Activated CD4-positive, alpha-beta memory T cell treated with anti-CD3 and anti-CD28 coated beads for 36 hours (primary cell): ENCODE measurements at regions of chr2 and their contacts with region 1.

Region 1: DNA sequence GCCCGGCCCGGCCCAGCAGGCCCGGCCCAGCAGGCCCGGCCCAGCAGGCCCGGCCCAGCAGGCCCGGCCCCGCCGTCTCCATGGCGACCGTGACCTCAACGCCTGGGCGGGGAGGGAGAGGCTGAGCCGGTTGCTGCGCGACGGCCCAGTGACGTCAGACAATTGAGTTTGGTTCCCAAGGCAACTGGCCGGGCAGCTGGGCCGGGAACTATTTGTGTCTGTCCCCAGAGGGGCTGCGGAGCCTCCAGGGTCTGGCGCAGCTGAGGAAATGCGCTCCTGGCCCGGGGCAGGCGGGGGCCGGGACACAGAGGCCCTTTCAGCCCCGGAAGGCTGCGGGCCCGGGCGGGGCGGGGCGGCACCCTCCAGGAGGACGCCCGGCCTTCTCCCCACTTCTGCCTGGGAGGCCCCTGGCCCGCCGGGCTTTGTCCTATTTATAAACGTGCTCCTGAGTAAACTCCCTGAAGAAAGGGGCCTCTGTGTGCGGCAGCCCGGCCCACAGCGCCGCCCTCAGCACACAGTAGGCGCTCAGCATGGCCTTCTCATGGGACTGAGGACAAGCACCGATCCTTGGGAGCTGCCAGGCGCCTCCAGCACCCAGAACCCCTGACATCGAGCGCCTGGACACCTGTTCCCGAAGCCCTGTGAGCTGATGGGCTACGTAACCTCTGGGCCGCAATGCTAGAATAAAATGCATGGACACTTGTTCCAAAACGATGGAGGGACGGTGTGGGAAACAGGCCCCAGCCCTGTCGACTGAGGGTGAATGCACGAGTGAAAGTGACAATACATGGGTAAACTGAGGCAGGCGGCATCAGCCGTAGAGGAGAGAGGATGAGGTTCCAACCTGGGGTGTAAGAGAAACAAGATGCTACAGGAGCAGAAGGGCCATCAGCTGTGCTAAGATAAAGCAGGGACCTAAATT is 12.3 kb downstream of the TEX44 start:
- DNase-seq: peak; percentile 94
- H3K4me3 Mint-ChIP-seq: peak overlapping the region; percentile 46
- H3K27ac Mint-ChIP-seq: no peak overlapping the region
- H3K4me1 Mint-ChIP-seq: peaks cover 3% of the 10 kb centered on the region
- H3K27me3 Mint-ChIP-seq: no peaks in the 10 kb centered on the region

Region 2: DNA sequence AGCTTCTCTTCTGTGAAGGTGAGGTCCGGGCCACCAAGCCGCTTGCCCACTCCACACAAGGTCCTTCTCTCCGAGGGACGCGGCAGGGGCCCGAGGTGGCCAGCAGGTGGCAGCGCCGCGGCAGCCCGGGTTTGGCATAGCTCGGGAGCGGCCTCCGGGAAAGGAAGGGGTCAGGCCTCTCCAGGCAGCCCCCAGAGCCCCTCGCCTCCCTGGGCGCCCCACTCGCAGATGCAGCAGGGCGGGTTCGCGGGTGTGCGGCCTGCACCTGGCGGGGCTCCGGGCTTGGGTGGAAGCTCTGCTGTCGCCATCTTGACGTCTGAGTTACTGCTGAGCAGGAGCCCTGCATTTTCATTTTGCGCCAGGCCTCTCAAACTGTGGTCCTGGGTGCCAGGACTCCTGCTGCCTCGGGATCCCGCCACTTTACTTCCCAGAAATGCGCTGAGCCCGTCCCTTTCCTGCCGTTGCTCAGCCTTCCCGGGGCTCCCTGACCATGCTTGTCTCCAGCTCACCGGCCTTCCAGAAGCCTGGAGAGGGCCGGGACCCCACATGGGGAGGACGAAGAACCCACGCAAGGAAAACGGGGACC is 122.0 kb before region 1 on chr2:
- CTCF ChIA-PET with region 1: interaction called, 10 read pairs
- POLR2A ChIA-PET with region 1: no interaction called
- intact Hi-C with region 1: no loop called
- DNase-seq: peak; percentile 84
- H3K4me3 Mint-ChIP-seq: peak overlapping the region; percentile 80
- H3K27ac Mint-ChIP-seq: peak overlapping the region; percentile 88
- H3K4me1 Mint-ChIP-seq: peaks cover 10% of the 10 kb centered on the region
- H3K27me3 Mint-ChIP-seq: no peaks in the 10 kb centered on the region

Region 3: GRCh38 chr2:231519432-231519831 is 85.5 kb before region 1 on chr2:
- CTCF ChIA-PET with region 1: interaction called, 40 read pairs
- POLR2A ChIA-PET with region 1: no interaction called
- intact Hi-C with region 1: loop called (anchors 1 kb)
- DNase-seq: no peak
- H3K4me3 Mint-ChIP-seq: no peak overlapping the region
- H3K27ac Mint-ChIP-seq: no peak overlapping the region
- H3K4me1 Mint-ChIP-seq: peaks cover 17% of the 10 kb centered on the region
- H3K27me3 Mint-ChIP-seq: no peaks in the 10 kb centered on the region

Region 4: DNA sequence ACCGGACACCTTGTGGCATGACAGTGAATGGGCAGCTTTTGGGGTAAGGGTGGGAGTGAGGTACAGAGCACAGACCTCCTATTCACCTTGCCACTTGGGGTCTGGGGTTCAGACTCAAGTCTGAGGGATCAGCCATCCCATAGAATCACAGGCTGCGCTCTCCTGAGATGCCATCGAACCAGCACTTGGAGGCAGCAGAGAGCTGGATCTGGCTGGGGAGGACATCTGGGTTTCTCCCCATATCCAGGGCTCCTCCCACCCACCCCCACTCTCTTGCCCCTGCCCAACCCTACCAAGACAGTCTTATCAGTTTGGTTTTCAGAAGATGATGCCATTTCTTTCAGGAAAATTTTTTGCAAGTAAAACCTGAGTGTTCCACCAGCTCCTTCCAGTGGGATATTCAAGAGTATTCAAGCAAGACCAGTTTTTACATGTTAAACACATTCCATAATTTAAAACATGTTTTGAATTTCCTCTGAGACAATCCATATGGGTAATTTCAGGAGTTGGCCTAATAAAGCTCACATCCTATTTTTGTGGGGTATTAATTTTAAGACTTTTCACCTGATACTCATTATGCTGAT is 41.5 kb before region 1 on chr2:
- CTCF ChIA-PET with region 1: interaction called, 70 read pairs
- POLR2A ChIA-PET with region 1: no interaction called
- intact Hi-C with region 1: loop called (anchors 1 kb)
- DNase-seq: peak; percentile 71
- H3K4me3 Mint-ChIP-seq: no peak overlapping the region
- H3K27ac Mint-ChIP-seq: no peak overlapping the region
- H3K4me1 Mint-ChIP-seq: peaks cover under 1% of the 10 kb centered on the region
- H3K27me3 Mint-ChIP-seq: peaks cover 1% of the 10 kb centered on the region

Region 5: GRCh38 chr2:231590619-231591018 is 14.3 kb before region 1 on chr2:
- CTCF ChIA-PET with region 1: interaction called, 23 read pairs
- POLR2A ChIA-PET with region 1: no interaction called
- intact Hi-C with region 1: no loop called
- DNase-seq: no peak
- H3K4me3 Mint-ChIP-seq: no peak overlapping the region
- H3K27ac Mint-ChIP-seq: no peak overlapping the region
- H3K4me1 Mint-ChIP-seq: no peaks in the 10 kb centered on the region
- H3K27me3 Mint-ChIP-seq: no peaks in the 10 kb centered on the region

Region 6: DNA sequence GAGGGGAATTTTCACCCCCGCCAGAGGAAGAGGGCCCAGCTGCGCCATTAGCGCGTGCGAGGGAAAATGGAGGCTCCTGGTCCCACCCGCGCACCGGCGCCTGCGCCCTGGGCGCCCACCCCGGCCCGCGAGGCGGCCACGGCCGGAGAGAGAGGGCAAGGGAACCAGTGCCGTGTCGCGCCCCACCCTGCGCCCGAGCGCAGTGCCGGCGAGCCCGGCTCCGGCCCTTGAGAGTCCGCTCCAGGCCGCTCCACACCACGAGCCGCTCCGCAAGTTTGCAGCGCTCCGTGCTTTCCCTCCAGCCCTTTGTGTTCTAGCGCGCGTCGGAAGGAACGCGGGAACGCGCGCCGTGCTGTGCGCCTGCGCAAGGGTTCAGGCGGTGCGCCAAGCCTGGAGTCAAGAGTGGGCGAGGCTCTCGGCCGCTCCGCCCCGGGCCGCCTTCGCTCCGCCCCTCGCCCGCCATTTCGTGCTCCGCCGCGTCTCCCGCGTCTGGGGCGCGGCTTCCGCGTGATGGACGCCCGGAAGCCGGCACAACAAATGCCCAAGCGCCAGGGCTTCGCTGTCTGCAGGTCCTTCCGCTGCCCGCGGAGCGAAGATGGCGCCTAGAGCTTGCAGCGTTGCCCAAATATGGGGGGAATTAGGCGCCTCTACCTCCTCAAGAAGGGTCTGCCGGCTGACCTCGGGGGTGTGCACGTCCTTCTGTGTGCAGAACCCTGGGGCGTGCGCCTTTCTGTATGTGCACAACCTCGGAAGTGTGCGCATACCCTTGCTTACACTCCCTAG is 57.3 kb after region 1 on chr2:
- CTCF ChIA-PET with region 1: interaction called, 3 read pairs
- POLR2A ChIA-PET with region 1: no interaction called
- intact Hi-C with region 1: loop called (anchors 2 kb)
- DNase-seq: peak; percentile 97
- H3K4me3 Mint-ChIP-seq: peak overlapping the region; percentile 65
- H3K27ac Mint-ChIP-seq: peak overlapping the region; percentile 94
- H3K4me1 Mint-ChIP-seq: peaks cover 12% of the 10 kb centered on the region
- H3K27me3 Mint-ChIP-seq: no peaks in the 10 kb centered on the region

Region 7: DNA sequence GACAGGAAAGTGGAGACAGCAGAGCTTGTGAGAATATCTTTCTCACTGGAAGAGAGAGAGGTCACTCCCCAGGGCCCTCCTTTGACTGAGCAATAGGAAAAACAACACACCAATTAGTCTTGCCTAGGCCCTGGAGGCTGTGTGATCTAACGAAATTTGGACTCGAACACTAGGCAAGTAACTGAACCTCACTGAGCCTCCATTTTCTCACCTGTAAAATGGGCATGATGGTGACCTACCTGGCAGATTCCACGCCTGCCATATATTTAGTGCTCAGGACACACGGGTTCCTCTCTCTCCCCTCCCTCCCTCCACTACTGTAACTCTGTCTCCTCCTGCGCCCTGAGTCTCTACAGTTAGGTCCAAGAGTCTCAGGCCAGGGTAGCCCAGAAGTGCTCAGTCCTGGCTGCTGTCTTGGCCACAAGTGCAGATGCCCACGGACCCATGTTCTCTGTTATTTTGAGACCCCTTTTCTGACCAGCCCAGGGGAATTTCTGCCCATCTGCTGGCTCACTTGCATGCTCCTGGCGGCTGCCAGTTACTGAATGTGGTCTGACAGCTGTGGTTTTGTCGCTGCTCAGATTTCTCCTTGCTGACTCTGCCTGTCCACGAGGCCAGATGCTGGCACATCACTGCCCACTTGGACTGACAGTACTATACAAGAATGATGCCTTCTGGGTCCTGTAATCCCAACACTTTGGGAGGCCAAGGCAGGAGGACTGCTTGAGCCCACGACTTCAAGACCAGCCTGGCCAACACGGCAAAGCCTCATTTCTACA is 1082.6 kb after region 1 on chr2:
- CTCF ChIA-PET with region 1: no interaction called
- POLR2A ChIA-PET with region 1: no interaction called
- intact Hi-C with region 1: no loop called
- DNase-seq: no peak
- H3K4me3 Mint-ChIP-seq: no peak overlapping the region
- H3K27ac Mint-ChIP-seq: no peak overlapping the region
- H3K4me1 Mint-ChIP-seq: no peaks in the 10 kb centered on the region
- H3K27me3 Mint-ChIP-seq: no peaks in the 10 kb centered on the region